ENCODE measurements at regions of chr14 and their contacts with region 1.

Region 1: GRCh38 chr14:64671591-64671990 is 32.6 kb upstream of the PLEKHG3 start:
- DNase-seq: peak; percentile 81
- H3K4me3 Mint-ChIP-seq: no peak overlapping the region
- H3K27ac Mint-ChIP-seq: no peak overlapping the region
- H3K4me1 Mint-ChIP-seq: peaks cover 41% of the 10 kb centered on the region
- H3K27me3 Mint-ChIP-seq: no peaks in the 10 kb centered on the region
- CTCF ChIP-seq: peak; percentile 69

Region 2: GRCh38 chr14:64540208-64541157 is 131.1 kb before region 1 on chr14 and contains the start of gene HSPA2:
- CTCF ChIA-PET with region 1: no interaction called
- POLR2A ChIA-PET with region 1: interaction called, 10 read pairs
- intact Hi-C with region 1: no loop called
- DNase-seq: peak; percentile 99
- H3K4me3 Mint-ChIP-seq: peak within 1 kb of the TSS; percentile 80
- H3K27ac Mint-ChIP-seq: peak within 1 kb of the TSS; percentile 74
- H3K4me1 Mint-ChIP-seq: peaks cover 12% of the 10 kb centered on the region
- H3K27me3 Mint-ChIP-seq: no peaks in the 10 kb centered on the region
- CTCF ChIP-seq: peak; percentile 67
- total RNA-seq, gene HSPA2: 0.51 and 0.56 TPM in 2 replicates

Region 3: GRCh38 chr14:64681796-64682710 is 10.5 kb after region 1 on chr14:
- CTCF ChIA-PET with region 1: interaction called, 17 read pairs
- POLR2A ChIA-PET with region 1: interaction called, 28 read pairs
- intact Hi-C with region 1: no loop called
- DNase-seq: peak; percentile 90
- H3K4me3 Mint-ChIP-seq: peak overlapping the region; percentile 50
- H3K27ac Mint-ChIP-seq: peak overlapping the region; percentile 98
- H3K4me1 Mint-ChIP-seq: peaks cover 26% of the 10 kb centered on the region
- H3K27me3 Mint-ChIP-seq: no peaks in the 10 kb centered on the region
- CTCF ChIP-seq: no peak

Region 4: DNA sequence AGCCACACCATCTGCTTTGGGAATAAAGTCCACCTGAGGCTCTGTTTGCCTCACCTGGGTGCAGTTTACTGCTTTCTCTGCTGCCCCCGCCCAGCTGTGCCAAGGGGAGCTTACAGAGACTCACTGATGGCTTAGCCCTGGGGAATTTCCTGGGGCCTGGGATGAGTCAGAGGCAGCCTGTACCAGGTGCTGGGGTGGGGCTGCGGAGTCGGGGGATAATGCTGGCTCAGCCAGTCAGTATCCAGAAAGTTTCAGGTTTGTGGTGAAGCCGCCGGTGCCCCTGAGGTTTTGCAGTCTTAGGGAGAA is 54.9 kb after region 1 on chr14:
- CTCF ChIA-PET with region 1: interaction called, 19 read pairs
- POLR2A ChIA-PET with region 1: interaction called, 3 read pairs
- intact Hi-C with region 1: no loop called
- DNase-seq: peak; percentile 87
- H3K4me3 Mint-ChIP-seq: peak overlapping the region; percentile 23
- H3K27ac Mint-ChIP-seq: peak overlapping the region; percentile 90
- H3K4me1 Mint-ChIP-seq: peaks cover 34% of the 10 kb centered on the region
- H3K27me3 Mint-ChIP-seq: no peaks in the 10 kb centered on the region
- CTCF ChIP-seq: no peak

Region 5: DNA sequence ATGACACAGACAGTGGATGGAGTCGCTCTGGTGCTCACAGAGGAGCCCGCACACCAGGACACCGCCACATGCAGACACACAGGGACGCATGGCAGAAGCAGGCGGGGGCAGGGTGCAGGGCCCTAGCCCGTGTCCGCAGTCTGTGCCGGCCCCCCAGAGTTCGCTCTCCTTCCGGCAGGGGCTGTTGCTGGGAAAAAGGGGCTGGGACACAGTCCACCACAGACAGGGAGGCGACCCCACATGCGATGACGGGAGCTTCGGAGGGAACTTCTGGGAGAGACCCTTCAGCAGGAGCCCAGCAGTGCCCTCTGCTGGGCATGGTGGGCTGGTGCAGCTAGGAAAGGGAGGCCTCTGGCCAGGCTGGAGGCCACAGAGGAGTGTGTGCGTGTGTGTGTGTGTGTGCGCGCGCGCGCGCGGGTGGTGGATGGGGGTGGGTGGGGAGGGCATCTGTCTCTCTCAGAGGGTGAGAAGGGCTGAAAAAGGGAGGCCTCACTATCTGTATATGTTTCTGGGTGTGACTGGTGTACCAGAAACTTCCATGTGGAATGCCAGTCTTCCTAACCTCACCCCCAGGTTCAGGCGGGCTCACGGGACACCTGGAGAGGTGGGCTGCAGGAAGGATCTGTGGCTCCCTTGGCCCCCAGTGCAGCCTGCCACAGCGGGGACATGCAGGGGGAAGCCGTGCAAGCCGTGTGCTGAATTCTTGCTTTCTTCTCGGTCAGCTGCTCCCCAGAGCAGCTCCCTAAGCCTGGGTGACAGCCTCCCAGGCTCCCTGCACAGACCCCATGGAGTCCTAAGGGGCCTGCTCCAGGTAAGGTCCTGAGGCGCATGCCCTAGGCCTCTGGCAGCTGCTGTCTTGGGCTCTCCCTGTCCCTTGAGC is 93.3 kb after region 1 on chr14:
- CTCF ChIA-PET with region 1: interaction called, 68 read pairs
- POLR2A ChIA-PET with region 1: interaction called, 43 read pairs
- intact Hi-C with region 1: loop called (anchors 1 kb)
- DNase-seq: peak; percentile 75
- H3K4me3 Mint-ChIP-seq: no peak overlapping the region
- H3K27ac Mint-ChIP-seq: no peak overlapping the region
- H3K4me1 Mint-ChIP-seq: peaks cover 50% of the 10 kb centered on the region
- H3K27me3 Mint-ChIP-seq: no peaks in the 10 kb centered on the region
- CTCF ChIP-seq: peak; percentile 92

Region 6: DNA sequence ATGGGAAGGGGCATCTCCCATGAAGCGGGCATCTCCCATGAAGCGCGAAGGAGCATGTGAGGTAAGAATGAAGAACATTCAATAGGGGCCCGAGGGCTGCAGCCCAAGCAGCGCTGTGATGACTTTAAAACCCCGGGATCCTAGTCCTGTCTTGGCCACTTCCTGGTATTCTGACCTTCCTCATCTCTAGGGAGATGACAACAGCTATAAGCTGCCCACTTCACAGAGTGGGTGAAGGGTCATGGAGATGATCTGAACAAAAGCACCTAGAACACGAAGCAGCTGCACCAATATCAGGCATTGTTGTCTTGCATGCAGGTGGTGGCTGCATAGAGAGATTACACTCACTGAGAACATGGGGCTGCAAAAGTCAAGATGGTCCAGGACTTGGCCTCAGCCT is 143.7 kb after region 1 on chr14:
- CTCF ChIA-PET with region 1: no interaction called
- POLR2A ChIA-PET with region 1: no interaction called
- intact Hi-C with region 1: no loop called
- DNase-seq: no peak
- H3K4me3 Mint-ChIP-seq: no peak overlapping the region
- H3K27ac Mint-ChIP-seq: no peak overlapping the region
- H3K4me1 Mint-ChIP-seq: peaks cover 5% of the 10 kb centered on the region
- H3K27me3 Mint-ChIP-seq: peaks cover 13% of the 10 kb centered on the region
- CTCF ChIP-seq: no peak

Measured in MCF 10A (cell line).